Activated CD4-positive, alpha-beta T cell treated with anti-CD3 and anti-CD28 coated beads, Interleukin-2, amount 10 ng/mL, durations not matched to agents 24 days and 14 days (primary cell): ENCODE measurements at regions of chr11 and their contacts with region 1.

Region 1: GRCh38 chr11:575996-576768 is at the start of gene PHRF1:
- DNase-seq: peak; percentile 98
- H3K4me3 Mint-ChIP-seq: peak within 1 kb of the TSS; percentile 87
- H3K27ac Mint-ChIP-seq: peak within 1 kb of the TSS; percentile 96
- H3K4me1 Mint-ChIP-seq: peaks cover 34% of the 10 kb centered on the region
- H3K27me3 Mint-ChIP-seq: peaks cover 4% of the 10 kb centered on the region
- total RNA-seq, gene PHRF1: 54.8 and 57.4 TPM in 2 replicates

Region 2: DNA sequence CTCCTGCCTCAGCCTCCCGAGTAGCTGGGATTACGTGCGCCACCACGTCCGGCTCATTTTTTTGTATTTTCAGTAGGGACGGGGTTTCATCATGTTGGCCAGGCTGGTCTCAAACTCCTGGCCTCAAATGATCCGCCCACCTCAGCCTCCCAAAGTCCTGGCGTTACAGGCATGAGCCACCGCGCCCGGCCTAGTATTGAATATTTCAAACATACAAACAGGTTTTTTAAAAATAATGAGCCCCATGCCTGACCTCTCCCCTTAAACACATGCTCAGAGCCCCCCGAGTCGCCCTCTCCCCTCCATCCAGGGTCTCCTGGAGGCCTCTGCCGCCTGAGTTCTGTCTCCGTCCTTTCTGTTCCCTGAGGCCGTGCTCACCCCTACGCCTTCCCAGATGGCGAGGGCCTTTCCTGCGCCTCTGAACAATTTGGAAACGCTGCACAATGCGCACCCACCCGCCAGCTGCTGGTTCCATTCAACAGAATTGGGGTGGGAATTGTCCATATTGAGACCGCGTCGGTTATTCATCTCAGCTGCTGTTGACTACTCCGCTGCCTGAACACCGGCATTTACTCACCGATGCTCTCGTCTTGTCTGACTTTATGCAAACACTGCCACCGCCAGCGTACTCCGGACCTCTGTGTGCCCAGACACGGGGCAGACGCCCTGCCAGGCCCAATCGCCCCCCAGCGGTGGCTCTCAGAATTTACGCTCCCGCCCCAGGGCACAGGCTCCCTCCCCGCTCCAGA is 55.6 kb before region 1 on chr11:
- intact Hi-C with region 1: no loop called
- DNase-seq: peak; percentile 73
- H3K4me3 Mint-ChIP-seq: no peak overlapping the region
- H3K27ac Mint-ChIP-seq: no peak overlapping the region
- H3K4me1 Mint-ChIP-seq: peaks cover 4% of the 10 kb centered on the region
- H3K27me3 Mint-ChIP-seq: no peaks in the 10 kb centered on the region

Region 3: DNA sequence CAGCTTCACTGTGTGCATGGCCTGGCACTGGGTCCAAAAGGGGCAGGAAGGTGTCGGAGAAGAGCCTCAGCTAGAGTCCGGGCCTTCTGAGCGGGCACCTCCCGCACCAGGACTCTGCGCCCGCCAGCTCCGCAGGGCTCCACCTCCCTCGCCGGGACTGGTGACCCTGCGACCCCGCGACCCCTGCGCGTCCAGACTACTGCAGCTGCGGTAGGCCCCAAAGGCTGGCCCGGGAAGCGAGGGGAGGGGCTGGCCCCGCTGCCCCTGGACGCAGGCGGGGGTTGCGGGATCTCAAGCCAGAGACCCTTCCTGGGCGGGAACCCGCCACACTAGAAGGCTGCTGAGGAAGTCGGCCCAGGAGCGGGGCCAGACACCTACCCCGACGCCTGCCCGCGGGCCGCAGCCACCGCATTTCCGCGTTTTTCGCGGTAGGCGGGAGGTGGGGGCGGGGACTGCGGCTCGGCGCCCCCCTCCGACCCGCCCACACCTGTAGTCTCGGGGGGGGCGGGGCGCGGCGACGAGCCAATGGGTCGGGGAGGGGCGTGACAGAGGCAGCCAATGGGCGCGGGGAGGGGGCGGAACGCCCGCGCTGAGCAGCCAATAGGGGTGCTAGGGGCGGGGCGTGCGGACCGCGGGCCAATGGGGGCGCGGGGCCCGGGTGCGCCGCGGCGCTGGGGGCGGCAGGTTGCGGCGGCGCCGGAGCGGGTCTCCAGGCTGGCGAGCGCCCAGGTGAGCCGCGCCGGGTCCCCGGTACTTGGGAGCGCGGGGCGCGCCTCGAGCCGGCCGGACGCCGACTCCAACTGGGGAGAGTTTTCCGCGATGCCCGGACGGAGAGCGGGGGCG is 15.7 kb before region 1 on chr11 and contains the starts of genes LMNTD2 and RASSF7:
- intact Hi-C with region 1: loop called (anchors 2 kb)
- DNase-seq: peak; percentile 99
- H3K4me3 Mint-ChIP-seq: peak within 1 kb of the TSS; percentile 92
- H3K27ac Mint-ChIP-seq: peak within 1 kb of the TSS; percentile 72
- H3K4me1 Mint-ChIP-seq: peaks cover 11% of the 10 kb centered on the region
- H3K27me3 Mint-ChIP-seq: peaks cover 15% of the 10 kb centered on the region
- total RNA-seq, gene LMNTD2: 0.47 and 1.1 TPM in 2 replicates
- total RNA-seq, gene RASSF7: 21.8 and 23.1 TPM in 2 replicates

Region 4: DNA sequence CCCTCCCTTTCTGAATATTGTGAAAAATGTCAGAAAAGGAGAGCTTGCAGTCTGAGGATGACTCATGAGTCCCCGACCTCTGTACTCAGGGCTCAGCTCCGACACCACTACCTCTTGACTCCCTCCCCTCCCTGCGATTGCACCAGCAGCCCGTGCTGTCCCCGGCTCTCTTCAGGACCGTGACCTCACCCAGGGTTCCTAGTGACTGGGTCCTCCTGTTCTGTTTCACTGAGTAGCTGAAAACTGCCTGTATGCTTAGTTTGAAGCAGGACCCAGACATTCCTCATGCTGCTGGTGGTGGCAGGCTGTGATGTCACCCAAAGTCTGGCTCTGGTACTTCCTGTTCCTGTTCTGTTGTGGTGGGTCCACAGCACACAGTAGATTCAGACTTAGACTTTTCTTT is 11.8 kb after region 1 on chr11:
- intact Hi-C with region 1: loop called (anchors 1 kb)
- DNase-seq: peak; percentile 88
- H3K4me3 Mint-ChIP-seq: peak overlapping the region; percentile 81
- H3K27ac Mint-ChIP-seq: peak overlapping the region; percentile 97
- H3K4me1 Mint-ChIP-seq: peaks cover 26% of the 10 kb centered on the region
- H3K27me3 Mint-ChIP-seq: no peaks in the 10 kb centered on the region

Region 5: GRCh38 chr11:615504-616319 is 39.5 kb after region 1 on chr11 and contains the start of gene IRF7:
- intact Hi-C with region 1: loop called (anchors 5 kb)
- DNase-seq: peak; percentile 97
- H3K4me3 Mint-ChIP-seq: peak within 1 kb of the TSS; percentile 89
- H3K27ac Mint-ChIP-seq: peak within 1 kb of the TSS; percentile 89
- H3K4me1 Mint-ChIP-seq: peaks cover 20% of the 10 kb centered on the region
- H3K27me3 Mint-ChIP-seq: no peaks in the 10 kb centered on the region
- total RNA-seq, gene IRF7: 42.8 and 45.3 TPM in 2 replicates

Region 6: DNA sequence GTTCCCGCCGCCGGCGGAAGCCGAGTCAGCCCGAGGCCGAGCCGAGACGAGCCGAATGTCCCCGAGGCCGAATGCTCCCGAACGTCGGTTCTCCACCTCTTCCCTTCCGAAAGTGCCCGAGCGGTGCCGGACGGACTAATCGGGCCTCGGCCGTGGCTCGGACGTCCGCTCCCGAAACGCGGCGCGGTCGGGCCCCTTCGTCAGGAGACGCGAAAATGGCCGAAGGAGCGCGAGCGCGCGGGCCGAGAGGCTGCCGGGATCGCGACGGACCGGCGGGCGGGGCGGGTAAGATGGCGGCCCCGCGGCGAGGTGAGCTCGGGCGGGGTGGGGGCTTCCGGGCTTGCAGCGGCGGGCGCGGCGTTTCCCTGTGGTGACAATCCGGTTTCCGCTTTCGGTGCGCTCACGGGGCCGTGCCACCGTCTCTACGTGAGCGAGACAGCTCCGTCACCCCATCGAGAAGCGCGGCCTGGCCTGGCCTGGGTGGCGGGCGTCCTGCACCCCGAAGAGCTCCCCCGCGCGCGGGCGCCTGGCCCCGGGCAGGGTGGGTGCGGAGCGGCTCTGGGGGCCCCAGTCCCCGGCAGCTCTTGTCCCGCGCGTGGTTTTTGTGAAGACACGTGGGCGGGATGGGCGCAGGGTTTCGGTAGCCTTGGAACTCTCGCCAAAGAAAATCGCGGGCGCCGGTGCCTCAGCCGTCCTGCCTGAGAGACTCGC is 119.5 kb after region 1 on chr11 and contains the start of gene TMEM80:
- intact Hi-C with region 1: loop called (anchors 1 kb)
- DNase-seq: peak; percentile 99
- H3K4me3 Mint-ChIP-seq: peak within 1 kb of the TSS; percentile 90
- H3K27ac Mint-ChIP-seq: peak within 1 kb of the TSS; percentile 94
- H3K4me1 Mint-ChIP-seq: peaks cover 42% of the 10 kb centered on the region
- H3K27me3 Mint-ChIP-seq: no peaks in the 10 kb centered on the region
- total RNA-seq, gene TMEM80: 12.3 and 12.5 TPM in 2 replicates

Region 7: DNA sequence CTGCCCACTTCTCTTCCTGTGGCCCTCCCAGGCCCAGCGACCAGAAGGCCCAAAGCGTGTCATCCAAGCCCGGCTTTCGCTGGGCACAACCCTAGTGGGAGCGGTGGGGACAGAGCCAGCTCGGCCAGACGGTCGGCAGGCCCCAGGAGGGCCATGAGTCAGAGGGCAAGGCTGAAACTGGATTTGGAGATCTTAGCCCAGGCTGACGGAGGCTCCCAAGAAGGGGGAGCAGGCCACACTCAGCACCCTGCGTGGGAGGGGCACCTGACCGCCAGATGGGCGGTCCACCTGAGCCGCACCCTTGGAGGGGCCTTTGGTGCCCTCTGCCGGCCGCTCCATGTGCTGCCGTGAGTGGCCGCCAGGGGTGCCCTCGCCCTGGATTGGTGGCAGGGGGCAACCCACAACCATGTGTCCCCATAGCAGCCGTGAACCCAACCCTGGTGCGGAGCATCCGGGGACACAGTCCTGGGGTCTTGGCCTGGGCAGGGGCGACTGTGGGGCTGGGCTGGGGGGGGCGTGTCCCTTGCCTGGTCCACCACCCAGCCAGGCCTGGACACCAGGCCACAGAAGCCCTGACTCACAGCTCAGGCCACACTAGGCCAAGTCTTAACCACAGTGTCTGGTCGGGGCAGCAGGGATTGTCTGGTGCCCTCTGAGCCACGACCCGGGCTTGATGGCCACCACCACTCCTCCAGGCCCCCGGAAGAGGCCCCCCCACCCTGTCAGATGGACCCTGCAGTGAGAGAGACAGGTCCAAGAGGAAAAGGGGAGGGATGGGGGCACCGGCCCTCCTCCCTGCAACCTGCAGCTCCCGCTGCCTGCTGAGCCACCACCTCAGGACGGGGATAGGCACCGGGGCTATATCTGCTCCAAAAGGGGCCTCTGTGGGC is 151.9 kb after region 1 on chr11:
- intact Hi-C with region 1: loop called (anchors 5 kb)
- DNase-seq: peak; percentile 95
- H3K4me3 Mint-ChIP-seq: no peak overlapping the region
- H3K27ac Mint-ChIP-seq: no peak overlapping the region
- H3K4me1 Mint-ChIP-seq: peaks cover 8% of the 10 kb centered on the region
- H3K27me3 Mint-ChIP-seq: peaks cover 5% of the 10 kb centered on the region

Region 8: DNA sequence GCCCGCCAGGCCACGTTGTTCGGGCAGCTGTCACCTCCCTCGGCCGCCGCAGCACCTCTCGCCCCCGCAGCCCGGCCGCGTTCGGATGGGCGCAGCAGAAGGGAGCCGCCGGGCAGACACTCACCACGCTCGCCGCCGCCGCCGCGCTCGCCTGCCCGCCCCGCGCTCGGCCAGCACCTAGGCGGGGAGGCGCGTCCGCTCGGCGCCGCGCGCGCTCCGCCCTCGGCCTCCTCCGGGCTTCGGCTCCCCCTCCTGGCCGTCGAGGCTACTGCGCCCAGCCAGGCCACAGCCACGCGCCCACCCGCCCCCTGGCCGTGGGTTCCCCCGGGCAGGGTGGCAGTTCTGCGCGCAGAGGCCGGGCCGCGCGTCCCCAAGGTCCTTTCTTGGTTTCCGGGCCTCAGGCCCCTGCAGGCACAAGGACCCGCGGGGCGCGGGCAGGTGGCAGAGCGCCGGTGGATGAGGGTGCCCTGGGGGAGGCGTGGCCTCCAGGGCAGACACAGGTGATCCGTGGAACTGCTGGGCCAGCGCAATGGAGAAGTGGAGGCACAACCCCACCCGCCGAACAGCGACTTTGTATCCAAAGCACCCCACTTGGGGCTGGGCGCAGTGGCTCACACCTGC is 222.0 kb after region 1 on chr11 and contains the start of gene SLC25A22:
- intact Hi-C with region 1: loop called (anchors 5 kb)
- DNase-seq: peak; percentile 97
- H3K4me3 Mint-ChIP-seq: peak within 1 kb of the TSS; percentile 91
- H3K27ac Mint-ChIP-seq: peak within 1 kb of the TSS; percentile 87
- H3K4me1 Mint-ChIP-seq: peaks cover 7% of the 10 kb centered on the region
- H3K27me3 Mint-ChIP-seq: no peaks in the 10 kb centered on the region
- total RNA-seq, gene SLC25A22: 84.9 and 90.3 TPM in 2 replicates